ENCODE measurements at regions of chr2 and their contacts with region 1.

Region 1: DNA sequence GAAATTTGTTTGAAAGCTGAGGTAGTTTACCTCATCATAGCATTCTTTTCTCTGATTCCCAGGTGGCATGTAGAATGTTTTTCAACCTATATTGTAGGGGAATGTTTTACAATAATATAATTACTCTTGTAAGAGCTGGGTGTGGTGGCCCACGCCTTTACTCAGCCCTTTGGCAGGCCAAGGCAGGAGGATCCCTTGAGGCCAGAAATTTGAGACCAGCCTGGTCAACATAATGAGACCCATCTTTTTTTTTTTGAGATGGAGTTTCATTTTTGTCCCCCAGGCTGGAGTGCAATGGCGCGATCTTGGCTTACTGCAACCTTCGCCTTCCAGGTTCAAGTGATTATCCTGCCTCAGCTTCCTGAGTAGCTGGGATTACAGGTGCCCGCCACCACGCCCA is 3.6 kb downstream of the USP39 start:
- DNase-seq: no peak
- ATAC-seq: no peak
- H3K4me3 ChIP-seq: no peak overlapping the region
- H3K27ac ChIP-seq: no peak overlapping the region
- H3K4me1 ChIP-seq: no peaks in the 10 kb centered on the region
- H3K27me3 ChIP-seq: no peaks in the 10 kb centered on the region

Region 2: GRCh38 chr2:85602476-85603234 is 17.0 kb before region 1 on chr2 and contains the start of gene TMEM150A:
- intact Hi-C with region 1: no loop called
- DNase-seq: peak; percentile 97 to 98
- ATAC-seq: peak; percentile 98
- H3K4me3 ChIP-seq: peak within 1 kb of the TSS; percentile 71 to 90
- H3K27ac ChIP-seq: peak within 1 kb of the TSS in 1 of 2 donors; percentile 35
- H3K4me1 ChIP-seq: peaks cover 2 to 8% of the 10 kb centered on the region in 2 donors
- H3K27me3 ChIP-seq: no peaks in the 10 kb centered on the region
- total RNA-seq, gene TMEM150A: 13.9 to 19.2 TPM

Region 3: DNA sequence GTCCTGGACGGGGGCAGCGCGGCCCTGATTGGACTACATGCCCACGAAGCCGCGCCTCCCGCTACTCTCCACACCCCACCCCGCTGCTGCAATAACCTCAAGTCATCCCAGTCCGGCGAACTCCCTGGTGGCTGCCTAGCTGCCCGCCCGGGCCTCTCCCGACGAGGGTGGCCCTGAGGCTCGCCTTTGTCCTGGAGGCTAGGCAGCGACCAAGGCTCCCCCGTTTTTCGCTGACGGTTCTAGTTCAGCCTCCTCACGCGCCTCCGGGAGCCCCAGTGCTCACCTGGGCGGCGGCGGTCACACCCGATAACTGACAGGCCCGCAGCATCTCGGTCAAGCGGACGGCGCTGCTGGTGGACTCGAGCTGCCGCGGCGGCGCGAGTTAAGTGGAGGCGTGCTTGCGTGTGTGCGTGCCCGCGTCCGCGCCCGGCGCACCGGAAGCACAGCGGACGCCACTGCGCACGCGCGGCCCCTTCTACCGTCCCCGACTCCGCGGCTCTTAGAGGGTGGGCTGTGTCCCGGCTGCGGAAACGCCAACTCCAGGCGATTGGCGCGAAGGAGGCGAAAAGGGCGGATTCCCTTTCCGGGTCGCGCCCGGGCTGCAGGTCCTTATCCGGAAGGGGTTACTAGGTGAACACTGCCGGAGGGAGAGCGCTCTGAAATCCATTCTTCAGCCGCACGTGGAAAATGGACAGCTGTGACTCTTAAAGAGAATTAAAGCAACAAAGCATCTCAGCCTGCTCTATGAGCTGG is 575.6 kb after region 1 on chr2 and contains the start of gene IMMT:
- intact Hi-C with region 1: loop called in 1 of 2 experiments (anchors 5 kb)
- DNase-seq: peak; percentile 98 to 99
- ATAC-seq: peak; percentile 96
- H3K4me3 ChIP-seq: peak within 1 kb of the TSS; percentile 68 to 80
- H3K27ac ChIP-seq: peak within 1 kb of the TSS; percentile 71 to 98
- H3K4me1 ChIP-seq: peaks cover 0 to 3% of the 10 kb centered on the region in 2 donors
- H3K27me3 ChIP-seq: no peaks in the 10 kb centered on the region
- total RNA-seq, gene IMMT: 68.4 to 81.2 TPM

Measured in aorta (tissue), 5 donors.